ENCODE measurements at regions of chr5 and their contacts with region 1.

Region 1: GRCh38 chr5:42889311-42889933 is 77.7 kb upstream of the SELENOP start:
- DNase-seq: peak; percentile 68 to 77
- ATAC-seq: peak; percentile 86 to 99 (median 94)
- H3K4me3 ChIP-seq: no peak overlapping the region
- H3K27ac ChIP-seq: no peak overlapping the region
- H3K4me1 ChIP-seq: no peaks in the 10 kb centered on the region
- H3K27me3 ChIP-seq: no peaks in the 10 kb centered on the region
- CTCF ChIP-seq: peak; percentile 92

Region 2: DNA sequence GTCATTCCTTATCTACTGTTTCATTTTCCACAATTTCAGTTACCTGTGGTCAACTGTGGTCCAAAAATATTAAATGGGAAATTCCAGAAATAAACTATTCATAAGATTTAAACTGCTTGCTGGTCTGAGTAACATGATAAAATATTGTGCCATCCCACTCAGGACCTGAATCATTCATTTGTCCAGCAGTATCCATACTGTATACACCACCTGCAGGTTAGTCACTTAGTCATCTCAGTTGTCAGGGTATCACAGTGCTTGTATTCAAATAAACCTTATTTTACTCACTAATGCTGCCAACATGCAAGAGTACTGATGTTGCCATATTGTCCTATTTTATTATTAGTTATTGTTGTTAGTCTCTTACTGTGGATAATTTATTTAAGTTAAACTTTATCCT is 824.6 kb before region 1 on chr5:
- intact Hi-C with region 1: loop called in 1 of 2 experiments (anchors 5 kb)
- DNase-seq: no peak
- ATAC-seq: no peak
- H3K4me3 ChIP-seq: no peak overlapping the region
- H3K27ac ChIP-seq: no peak overlapping the region
- H3K4me1 ChIP-seq: no peaks in the 10 kb centered on the region
- H3K27me3 ChIP-seq: no peaks in the 10 kb centered on the region
- CTCF ChIP-seq: no peak

Region 3: GRCh38 chr5:42756606-42757601 is 132.5 kb before region 1 on chr5 and contains the start of gene CCDC152:
- intact Hi-C with region 1: no loop called
- DNase-seq: peak; percentile 22 to 51
- ATAC-seq: peak in 1 of 4 donors; percentile 27
- H3K4me3 ChIP-seq: peak within 1 kb of the TSS; percentile 56
- H3K27ac ChIP-seq: no peak within 1 kb of the TSS
- H3K4me1 ChIP-seq: peaks cover 4% of the 10 kb centered on the region
- H3K27me3 ChIP-seq: no peaks in the 10 kb centered on the region
- CTCF ChIP-seq: no peak
- total RNA-seq, gene CCDC152: 0.34 to 0.88 (median 0.55) TPM

Region 4: GRCh38 chr5:42811591-42812446 is 77.6 kb before region 1 on chr5 and contains the start of gene SELENOP:
- intact Hi-C with region 1: loop called (anchors 5 kb)
- DNase-seq: peak; percentile 30 to 56
- ATAC-seq: peak; percentile 90 to 94 (median 92)
- H3K4me3 ChIP-seq: peak within 1 kb of the TSS; percentile 82
- H3K27ac ChIP-seq: peak within 1 kb of the TSS; percentile 92
- H3K4me1 ChIP-seq: peaks cover 28% of the 10 kb centered on the region
- H3K27me3 ChIP-seq: no peaks in the 10 kb centered on the region
- CTCF ChIP-seq: no peak
- total RNA-seq, gene SELENOP: 88.4 to 155 (median 99.5) TPM

Region 5: DNA sequence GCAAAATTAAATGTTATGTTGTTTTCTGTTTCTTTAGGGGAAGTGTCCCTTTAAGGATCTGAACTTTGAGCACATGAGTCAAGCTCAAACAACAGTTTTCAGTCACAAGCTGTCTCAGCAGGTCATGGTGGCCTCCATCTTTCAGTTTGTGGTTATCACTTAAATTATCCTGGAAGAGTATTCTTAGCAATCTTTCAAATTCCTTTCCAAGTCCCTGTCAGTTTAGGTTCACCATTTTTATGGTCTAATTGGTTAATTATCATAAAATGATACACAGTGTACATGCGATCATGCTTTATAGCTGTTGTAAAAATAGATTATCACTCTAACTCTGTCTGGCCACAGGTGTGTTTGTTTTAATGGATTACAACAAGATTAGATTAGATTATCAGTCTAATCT is 34.6 kb before region 1 on chr5:
- intact Hi-C with region 1: no loop called
- DNase-seq: no peak
- ATAC-seq: no peak
- H3K4me3 ChIP-seq: no peak overlapping the region
- H3K27ac ChIP-seq: no peak overlapping the region
- H3K4me1 ChIP-seq: peaks cover 7% of the 10 kb centered on the region
- H3K27me3 ChIP-seq: no peaks in the 10 kb centered on the region
- CTCF ChIP-seq: no peak